RWPE1 (cell line): ENCODE measurements at regions of chr10 and their contacts with region 1.

Region 1: GRCh38 chr10:100872034-100872791 is 40.5 kb upstream of the SLF2 start:
- DNase-seq: peak; percentile 62
- H3K27ac ChIP-seq: no peak overlapping the region
- CTCF ChIP-seq: no peak; the same call in 1 of the 2 replicates

Region 2: GRCh38 chr10:100562008-100562711 is 310.1 kb before region 1 on chr10:
- CTCF ChIA-PET with region 1: interaction called, 15 read pairs
- POLR2A ChIA-PET with region 1: no interaction called
- DNase-seq: peak; percentile 92
- H3K27ac ChIP-seq: no peak overlapping the region
- CTCF ChIP-seq: peak; percentile 95